ENCODE measurements at regions of chr11 and their contacts with region 1.

Region 1: DNA sequence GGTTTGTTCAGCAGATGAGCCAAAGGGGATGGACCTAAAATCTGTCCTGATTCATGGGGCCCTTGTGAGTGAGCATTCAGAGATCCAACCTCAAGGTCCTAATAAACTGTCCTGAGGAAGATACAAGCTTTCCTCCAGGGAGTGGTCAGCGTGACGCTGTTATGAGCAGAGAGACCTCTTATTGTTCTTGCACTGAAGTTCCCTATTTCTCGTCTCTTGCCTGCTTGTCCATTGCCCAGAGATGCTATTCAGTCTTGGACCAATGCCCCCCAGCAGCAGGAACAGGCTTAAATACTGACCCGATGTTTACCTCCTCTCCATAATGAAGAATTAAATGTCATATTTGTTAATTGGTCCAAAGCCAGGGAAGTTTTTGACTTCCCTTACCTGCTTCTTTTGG is 225.2 kb upstream of the PGR start:
- DNase-seq: no peak
- H3K4me3 ChIP-seq: no peak overlapping the region
- H3K27ac ChIP-seq: no peak overlapping the region
- H3K4me1 ChIP-seq: no peaks in the 10 kb centered on the region
- H3K27me3 ChIP-seq: no peaks in the 10 kb centered on the region
- CTCF ChIP-seq: no peak
- POLR2A ChIP-seq: no peak

Region 2: GRCh38 chr11:101043940-101044339 is 310.9 kb before region 1 on chr11:
- CTCF ChIA-PET with region 1: no interaction called
- POLR2A ChIA-PET with region 1: no interaction called
- dilution Hi-C with region 1: no loop called
- intact Hi-C with region 1: loop called (anchors 5 kb)
- DNase-seq: no peak
- H3K4me3 ChIP-seq: no peak overlapping the region
- H3K27ac ChIP-seq: no peak overlapping the region
- H3K4me1 ChIP-seq: no peaks in the 10 kb centered on the region
- H3K27me3 ChIP-seq: no peaks in the 10 kb centered on the region
- CTCF ChIP-seq: no peak
- POLR2A ChIP-seq: no peak